Gastrocnemius medialis (tissue), 4 donors: ENCODE measurements at regions of chr1 and their contacts with region 1.

Region 1: GRCh38 chr1:145891587-145892485 is 6.2 kb upstream of the ANKRD35 start:
- DNase-seq: peak; percentile 98
- ATAC-seq: peak; percentile 89 to 90
- H3K4me3 ChIP-seq: peak overlapping the region in 3 of 4 donors; percentile 6 to 29 (median 12)
- H3K27ac ChIP-seq: peak overlapping the region; percentile 88 to 98 (median 91)
- H3K4me1 ChIP-seq: peaks cover 36 to 43% of the 10 kb centered on the region in 2 donors
- H3K27me3 ChIP-seq: no peaks in the 10 kb centered on the region
- CTCF ChIP-seq: peak; percentile 92 to 98 (median 97)
- POLR2A ChIP-seq: peak; percentile 44 to 85

Region 2: DNA sequence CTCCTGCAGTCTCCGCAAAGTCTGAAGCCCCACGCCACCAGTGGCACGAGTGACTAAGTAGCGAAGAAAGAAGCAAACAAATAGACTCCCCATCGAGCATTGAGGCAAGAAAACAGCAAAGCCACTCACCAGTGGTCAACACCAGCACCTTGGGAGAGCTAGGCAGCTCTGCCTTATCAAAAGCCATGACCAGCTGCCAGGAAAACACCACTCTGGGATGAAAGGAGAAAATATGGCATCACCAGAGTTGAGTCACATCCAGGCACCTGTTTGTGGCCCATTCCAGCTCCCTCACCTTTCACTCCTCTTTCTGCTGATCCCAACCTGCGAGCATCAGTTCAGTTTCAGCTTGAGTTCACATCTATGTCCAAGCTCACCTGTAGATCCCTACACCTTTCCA is 201.9 kb before region 1 on chr1:
- in situ Hi-C with region 1: no loop called
- intact Hi-C with region 1: no loop called
- DNase-seq: no peak
- ATAC-seq: no peak
- H3K4me3 ChIP-seq: no peak overlapping the region
- H3K27ac ChIP-seq: no peak overlapping the region
- H3K4me1 ChIP-seq: no peaks in the 10 kb centered on the region
- H3K27me3 ChIP-seq: no peaks in the 10 kb centered on the region
- CTCF ChIP-seq: no peak
- POLR2A ChIP-seq: no peak

Region 3: GRCh38 chr1:145906954-145907753 is 15.3 kb after region 1 on chr1:
- in situ Hi-C with region 1: no loop called
- intact Hi-C with region 1: loop called (anchors 1 kb)
- DNase-seq: no peak
- ATAC-seq: peak in 1 of 2 donors; percentile 17
- H3K4me3 ChIP-seq: no peak overlapping the region
- H3K27ac ChIP-seq: peak overlapping the region; percentile 1 to 64 (median 56)
- H3K4me1 ChIP-seq: peaks cover 12 to 13% of the 10 kb centered on the region in 2 donors
- H3K27me3 ChIP-seq: no peaks in the 10 kb centered on the region
- CTCF ChIP-seq: no peak
- POLR2A ChIP-seq: no peak

Region 4: DNA sequence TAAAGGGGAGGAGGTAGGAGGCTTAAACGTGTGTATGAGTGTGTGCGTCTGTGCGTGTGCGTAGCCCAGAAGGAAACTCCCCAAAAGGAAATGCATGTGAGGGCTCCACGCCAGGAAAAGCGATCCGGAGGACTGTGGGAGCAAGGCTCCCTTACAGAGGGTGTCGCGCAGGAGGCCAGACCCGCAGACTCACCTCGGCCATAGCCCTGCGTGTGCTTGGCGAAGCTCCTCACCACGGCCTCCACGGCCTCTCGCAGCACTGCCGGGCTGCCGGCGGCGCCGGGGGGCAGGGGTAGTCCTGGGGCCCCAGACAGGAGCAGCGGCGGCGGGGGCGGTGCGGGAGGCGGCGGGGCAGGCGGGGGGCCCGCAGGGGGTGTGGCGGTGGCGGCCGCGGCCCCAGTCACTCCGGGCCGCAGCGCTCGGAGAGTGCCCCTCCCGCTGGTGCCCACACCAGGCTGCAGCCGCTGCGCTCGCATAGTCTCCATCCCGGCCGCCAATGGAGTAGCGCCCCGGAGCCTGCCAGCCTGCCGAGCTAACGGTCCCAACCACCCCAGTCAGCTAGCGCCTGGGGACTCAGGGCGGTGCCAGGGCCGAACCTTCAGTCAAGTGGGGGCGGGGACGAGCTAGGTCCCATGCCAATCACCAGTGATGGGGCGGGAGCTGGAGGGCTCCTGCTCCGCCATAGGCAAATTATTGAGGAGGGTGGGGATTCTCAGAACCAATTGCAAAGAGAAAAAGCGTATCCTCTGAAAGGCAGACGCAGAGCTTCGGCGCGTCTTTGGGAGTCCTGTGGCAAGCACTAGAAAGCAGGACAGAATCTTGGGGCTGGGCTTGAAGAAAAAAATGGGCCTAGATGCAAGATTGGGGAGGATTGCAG is 65.8 kb after region 1 on chr1 and contains the start of gene LIX1L:
- in situ Hi-C with region 1: loop called in 1 of 4 experiments (anchors 10 kb)
- intact Hi-C with region 1: no loop called
- DNase-seq: peak; percentile 97 to 98
- ATAC-seq: peak; percentile 74 to 81
- H3K4me3 ChIP-seq: peak within 1 kb of the TSS; percentile 62 to 88 (median 70)
- H3K27ac ChIP-seq: peak within 1 kb of the TSS; percentile 88 to 99 (median 96)
- H3K4me1 ChIP-seq: peaks cover 58 to 72% of the 10 kb centered on the region in 2 donors
- H3K27me3 ChIP-seq: no peaks in the 10 kb centered on the region
- CTCF ChIP-seq: no peak
- POLR2A ChIP-seq: peak; percentile 91 to 93
- total RNA-seq, gene LIX1L: 37.1 to 108 (median 75.4) TPM

Region 5: DNA sequence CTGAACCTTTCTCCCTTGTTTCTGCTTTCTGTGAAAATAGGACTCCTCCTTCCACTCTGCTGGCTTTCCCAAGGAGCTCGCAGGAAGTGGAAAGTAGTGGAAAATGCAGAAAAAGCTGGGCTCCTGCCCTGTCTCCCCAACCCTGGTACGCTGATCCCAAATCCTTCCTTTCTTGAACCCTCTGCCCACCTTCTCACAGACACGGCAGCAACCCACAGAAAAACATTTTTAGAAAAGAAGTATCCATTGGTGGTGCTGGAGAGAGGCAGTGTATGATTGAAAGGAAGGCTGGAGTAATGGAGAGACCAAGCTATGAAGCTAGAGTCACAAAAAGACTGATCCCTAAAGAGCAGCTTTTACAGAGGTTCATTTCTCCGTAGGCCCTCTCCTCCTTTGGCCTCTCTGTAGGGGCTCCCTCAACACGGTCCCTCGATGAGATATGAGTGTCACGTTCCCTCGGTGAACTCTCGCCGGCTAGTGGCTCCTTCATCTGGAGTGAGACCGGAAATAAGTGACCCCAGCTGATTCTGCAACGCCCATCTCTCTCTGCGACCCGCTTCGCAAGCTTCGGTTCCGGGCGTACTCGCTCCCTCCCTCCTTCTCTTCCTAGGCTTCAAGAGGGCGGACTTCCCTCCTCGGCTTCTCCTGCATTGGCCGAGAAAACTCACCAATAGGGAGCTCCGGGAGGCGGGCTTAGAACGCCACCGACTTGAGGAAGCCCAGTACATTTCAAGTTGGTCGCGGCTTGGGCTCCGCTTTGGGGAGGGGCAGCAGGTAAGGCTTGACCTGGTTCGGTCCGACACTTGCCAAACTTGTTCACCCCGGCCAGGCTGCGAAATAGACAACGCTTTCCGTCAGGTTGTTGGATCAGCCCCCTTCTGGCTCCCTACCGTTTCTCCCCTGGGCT is 72.4 kb after region 1 on chr1 and contains the starts of genes ANKRD34A and POLR3GL:
- in situ Hi-C with region 1: loop called in 1 of 4 experiments (anchors 10 kb)
- intact Hi-C with region 1: loop called (anchors 2 kb)
- DNase-seq: peak; percentile 97
- ATAC-seq: peak; percentile 81 to 88
- H3K4me3 ChIP-seq: peak within 1 kb of the TSS; percentile 67 to 82 (median 73)
- H3K27ac ChIP-seq: peak within 1 kb of the TSS; percentile 88 to 99 (median 96)
- H3K4me1 ChIP-seq: peaks cover 28 to 34% of the 10 kb centered on the region in 2 donors
- H3K27me3 ChIP-seq: no peaks in the 10 kb centered on the region
- CTCF ChIP-seq: peak in 1 of 5 experiments; percentile 1
- POLR2A ChIP-seq: peak; percentile 91 to 97
- total RNA-seq, gene ANKRD34A: 3.3 to 19.0 (median 6.7) TPM
- total RNA-seq, gene POLR3GL: 43.5 to 78.8 (median 59.4) TPM

Region 6: GRCh38 chr1:145974721-145975120 is 82.9 kb after region 1 on chr1:
- in situ Hi-C with region 1: no loop called
- intact Hi-C with region 1: no loop called
- DNase-seq: no peak
- ATAC-seq: no peak
- H3K4me3 ChIP-seq: no peak overlapping the region
- H3K27ac ChIP-seq: peak overlapping the region; percentile 25 to 50 (median 40)
- H3K4me1 ChIP-seq: peaks cover 19% of the 10 kb centered on the region in 2 donors
- H3K27me3 ChIP-seq: no peaks in the 10 kb centered on the region
- CTCF ChIP-seq: no peak
- POLR2A ChIP-seq: no peak

Region 7: GRCh38 chr1:146007506-146008133 is 115.8 kb after region 1 on chr1:
- in situ Hi-C with region 1: loop called in 2 of 4 experiments (anchors 5 to 10 kb)
- intact Hi-C with region 1: loop called (anchors 2 kb)
- DNase-seq: no peak
- ATAC-seq: no peak
- H3K4me3 ChIP-seq: peak overlapping the region; percentile 8 to 34 (median 22)
- H3K27ac ChIP-seq: peak overlapping the region; percentile 95 to 99 (median 96)
- H3K4me1 ChIP-seq: peaks cover 32 to 46% of the 10 kb centered on the region in 2 donors
- H3K27me3 ChIP-seq: no peaks in the 10 kb centered on the region
- CTCF ChIP-seq: no peak
- POLR2A ChIP-seq: no peak

Region 8: DNA sequence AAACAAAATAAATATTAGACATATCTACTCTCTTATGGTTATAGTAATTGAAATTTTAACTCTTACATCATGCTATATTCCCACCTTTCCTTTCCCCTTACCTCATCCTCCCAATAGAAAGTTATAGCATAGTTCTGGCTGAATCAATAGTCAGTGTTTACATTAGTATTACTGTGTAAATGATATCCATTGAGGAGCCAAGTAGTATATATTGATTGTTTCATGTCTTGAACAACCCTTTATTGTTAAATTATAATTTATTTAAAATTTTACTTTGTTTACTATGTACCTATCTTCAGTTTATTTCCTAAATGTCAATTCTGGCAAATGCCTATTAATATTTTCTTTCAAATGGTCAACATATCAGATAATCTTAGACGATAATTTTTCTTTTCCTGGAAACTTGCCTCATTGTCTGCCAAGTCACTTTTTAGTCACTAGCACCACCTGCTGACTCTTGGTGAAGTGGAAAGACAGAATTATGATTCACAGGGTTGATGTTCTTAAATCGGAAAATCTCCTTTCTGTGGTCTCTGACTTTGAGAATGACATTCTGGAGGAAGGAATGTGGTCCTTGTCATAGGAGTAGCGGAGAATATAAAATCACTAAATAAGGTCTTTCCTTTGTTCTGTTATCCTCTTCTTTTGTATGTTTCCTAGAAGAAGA is 121.0 kb after region 1 on chr1:
- in situ Hi-C with region 1: loop called in 2 of 4 experiments (anchors 5 to 10 kb)
- intact Hi-C with region 1: no loop called
- DNase-seq: no peak
- ATAC-seq: peak; percentile 68 to 75
- H3K4me3 ChIP-seq: no peak overlapping the region
- H3K27ac ChIP-seq: peak overlapping the region; percentile 7 to 40 (median 20)
- H3K4me1 ChIP-seq: peaks cover 6 to 17% of the 10 kb centered on the region in 2 donors
- H3K27me3 ChIP-seq: no peaks in the 10 kb centered on the region
- CTCF ChIP-seq: peak; percentile 67 to 77 (median 73)
- POLR2A ChIP-seq: no peak